ENCODE measurements at regions of chr12 and their contacts with region 1.

Region 1: GRCh38 chr12:43501703-43502102 is 50.3 kb downstream of the ADAMTS20 start:
- DNase-seq: no peak
- H3K4me3 Mint-ChIP-seq: no peak overlapping the region
- H3K27ac Mint-ChIP-seq: no peak overlapping the region
- H3K4me1 Mint-ChIP-seq: no peaks in the 10 kb centered on the region
- H3K27me3 Mint-ChIP-seq: no peaks in the 10 kb centered on the region

Region 2: DNA sequence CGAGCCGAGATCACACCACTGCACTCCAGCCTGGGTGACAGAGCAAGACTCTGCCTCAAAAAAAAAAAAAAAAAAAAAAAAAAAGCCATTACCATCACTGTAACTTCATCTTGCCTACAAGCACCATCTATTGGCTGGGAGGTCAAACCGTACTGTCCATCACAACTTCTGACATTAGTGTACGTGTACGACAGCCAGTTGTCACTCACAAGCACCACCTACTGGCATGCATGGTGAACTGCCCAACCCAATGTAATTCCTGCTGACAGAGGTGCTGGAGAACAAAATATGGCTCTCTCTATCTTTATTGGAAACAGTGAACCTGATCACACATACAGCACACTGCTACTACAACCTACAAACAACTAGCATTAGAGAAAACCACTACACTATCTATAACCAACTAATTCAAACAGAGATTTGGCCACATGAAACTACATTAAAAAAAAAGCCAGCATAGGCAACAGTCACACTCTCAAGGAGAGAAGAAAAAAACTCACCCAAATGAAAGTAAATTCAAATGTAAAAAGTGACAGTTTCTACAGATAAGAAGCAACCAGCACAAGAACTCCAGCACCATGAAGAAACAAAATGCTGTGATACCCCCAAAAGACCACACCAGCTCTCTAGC is 174.6 kb after region 1 on chr12:
- CTCF ChIA-PET with region 1: no interaction called
- POLR2A ChIA-PET with region 1: no interaction called
- intact Hi-C with region 1: loop called (anchors 2 kb)
- DNase-seq: no peak
- H3K4me3 Mint-ChIP-seq: no peak overlapping the region
- H3K27ac Mint-ChIP-seq: no peak overlapping the region
- H3K4me1 Mint-ChIP-seq: no peaks in the 10 kb centered on the region
- H3K27me3 Mint-ChIP-seq: peaks cover 19% of the 10 kb centered on the region

Measured in activated CD4-positive, alpha-beta memory T cell treated with anti-CD3 and anti-CD28 coated beads for 36 hours (primary cell).